ENCODE measurements at regions of chr3 and their contacts with region 1.

Region 1: DNA sequence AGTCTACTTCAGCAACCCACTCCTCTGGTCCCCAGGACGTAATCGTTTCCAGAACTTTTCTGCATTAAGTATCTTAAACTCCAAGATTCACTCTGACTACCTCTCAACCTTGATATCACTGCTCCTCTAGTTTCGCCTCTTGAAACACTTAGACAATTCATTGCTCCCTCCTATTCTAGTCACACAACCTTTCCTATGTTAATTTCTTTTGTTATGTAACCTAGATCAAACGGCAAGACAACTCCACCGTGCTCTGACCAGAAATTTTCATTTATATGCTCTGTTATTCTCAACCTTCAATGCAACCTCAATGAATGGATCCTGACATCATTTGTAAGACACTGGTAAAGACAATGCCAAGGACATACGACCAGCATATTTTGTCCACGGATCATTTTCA is 71.3 kb downstream of the CADM2 start:
- DNase-seq: no peak
- ATAC-seq: no peak
- H3K4me3 ChIP-seq: no peak overlapping the region
- H3K4me3 Mint-ChIP-seq: no peak overlapping the region
- H3K27ac ChIP-seq: no peak overlapping the region
- H3K27ac Mint-ChIP-seq: no peak overlapping the region
- H3K4me1 ChIP-seq: no peaks in the 10 kb centered on the region
- H3K4me1 Mint-ChIP-seq: no peaks in the 10 kb centered on the region
- H3K27me3 ChIP-seq: no peaks in the 10 kb centered on the region
- H3K27me3 Mint-ChIP-seq: no peaks in the 10 kb centered on the region
- CTCF ChIP-seq: no peak

Region 2: GRCh38 chr3:84885199-84885882 is 144.7 kb before region 1 on chr3:
- CTCF ChIA-PET with region 1: no interaction called
- POLR2A ChIA-PET with region 1: no interaction called
- intact Hi-C with region 1: no loop called
- DNase-seq: no peak
- ATAC-seq: no peak
- H3K4me3 ChIP-seq: no peak overlapping the region
- H3K4me3 Mint-ChIP-seq: no peak overlapping the region
- H3K27ac ChIP-seq: no peak overlapping the region
- H3K27ac Mint-ChIP-seq: no peak overlapping the region
- H3K4me1 ChIP-seq: no peaks in the 10 kb centered on the region
- H3K4me1 Mint-ChIP-seq: no peaks in the 10 kb centered on the region
- H3K27me3 ChIP-seq: no peaks in the 10 kb centered on the region
- H3K27me3 Mint-ChIP-seq: no peaks in the 10 kb centered on the region
- CTCF ChIP-seq: no peak

Region 3: DNA sequence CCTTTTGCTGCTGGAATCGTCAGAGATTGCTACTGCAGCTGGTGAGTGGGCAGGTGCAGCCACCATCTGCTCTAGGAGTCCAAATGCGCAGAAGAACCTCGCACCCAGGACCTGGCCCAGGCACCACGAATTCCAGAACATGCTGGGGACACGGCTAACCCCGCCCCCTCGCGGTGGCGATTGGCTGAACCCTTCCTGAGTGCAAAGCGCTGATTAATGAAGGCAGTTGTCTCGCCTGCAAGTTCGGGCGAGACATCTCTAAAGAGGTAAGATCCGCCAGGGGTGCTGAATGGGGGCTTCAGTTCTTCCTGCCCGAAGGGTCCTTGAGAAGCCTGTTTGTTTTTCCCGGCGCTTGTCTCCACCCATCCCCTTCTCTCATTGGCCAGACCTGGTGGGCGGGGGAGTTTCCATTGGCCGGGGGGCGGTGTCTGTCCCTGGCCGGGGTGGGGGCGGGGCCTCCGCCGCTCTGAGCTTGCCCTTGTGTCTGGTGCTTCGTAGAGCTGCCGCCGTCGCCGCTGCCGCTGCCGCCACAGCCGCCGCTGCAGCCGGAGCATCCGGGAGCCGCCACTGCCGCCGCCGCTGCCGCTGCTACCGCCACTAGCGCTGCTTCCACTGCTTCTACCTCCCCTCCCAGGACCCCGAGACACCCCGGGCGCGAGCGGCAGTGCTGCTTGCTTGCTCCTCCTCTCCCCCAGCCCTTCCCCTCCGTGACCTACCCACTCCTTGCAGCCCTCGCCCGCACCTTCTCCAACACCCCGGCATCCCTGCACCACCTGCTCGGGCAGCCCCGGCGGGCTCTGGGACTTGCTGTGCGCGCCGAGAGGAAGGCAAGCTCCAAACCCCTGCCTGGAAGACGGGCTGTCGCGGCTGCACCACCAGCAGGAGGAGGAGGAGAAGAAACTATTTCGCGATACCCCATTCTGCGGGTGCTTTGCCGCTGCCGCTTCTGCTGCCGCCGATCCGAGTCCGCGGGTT is 71.3 kb before region 1 on chr3 and contains the start of gene CADM2:
- CTCF ChIA-PET with region 1: no interaction called
- POLR2A ChIA-PET with region 1: no interaction called
- intact Hi-C with region 1: no loop called
- DNase-seq: peak; percentile 15 to 70 (median 50)
- ATAC-seq: peak; percentile 93
- H3K4me3 ChIP-seq: peak within 1 kb of the TSS; percentile 28 to 44
- H3K4me3 Mint-ChIP-seq: peak within 1 kb of the TSS; percentile 66
- H3K27ac ChIP-seq: no peak within 1 kb of the TSS
- H3K27ac Mint-ChIP-seq: no peak within 1 kb of the TSS
- H3K4me1 ChIP-seq: peaks cover 12% of the 10 kb centered on the region
- H3K4me1 Mint-ChIP-seq: peaks cover 18% of the 10 kb centered on the region
- H3K27me3 ChIP-seq: peaks cover 4 to 6% of the 10 kb centered on the region in 2 experiments
- H3K27me3 Mint-ChIP-seq: peaks cover 41% of the 10 kb centered on the region
- CTCF ChIP-seq: no peak
- total RNA-seq, gene CADM2: 0.33 to 0.36 TPM

Region 4: DNA sequence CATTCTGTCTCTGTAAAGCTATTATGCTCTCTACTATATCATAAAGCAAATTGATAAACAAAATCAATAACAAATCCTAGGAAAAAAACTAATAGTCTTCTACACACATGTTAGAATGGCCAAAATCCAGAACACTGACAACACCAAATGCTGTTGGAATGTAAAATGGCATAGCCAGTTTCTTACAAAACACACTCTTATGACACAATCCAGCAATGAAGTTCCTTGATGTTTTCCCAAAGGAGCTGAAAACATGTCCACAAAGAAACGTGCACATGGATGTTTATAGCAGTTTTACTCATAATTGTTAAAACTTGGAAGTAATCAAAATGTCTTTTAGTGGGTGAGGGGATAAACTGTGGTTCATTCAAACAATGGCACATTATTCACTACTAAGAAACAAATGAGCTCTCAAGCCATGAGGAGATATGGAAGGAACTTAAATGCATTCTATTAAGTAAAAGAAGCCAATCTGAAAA is 38.6 kb before region 1 on chr3:
- CTCF ChIA-PET with region 1: no interaction called
- POLR2A ChIA-PET with region 1: no interaction called
- intact Hi-C with region 1: loop called in 1 of 2 experiments (anchors 1 kb)
- DNase-seq: no peak
- ATAC-seq: no peak
- H3K4me3 ChIP-seq: no peak overlapping the region
- H3K4me3 Mint-ChIP-seq: no peak overlapping the region
- H3K27ac ChIP-seq: no peak overlapping the region
- H3K27ac Mint-ChIP-seq: no peak overlapping the region
- H3K4me1 ChIP-seq: no peaks in the 10 kb centered on the region
- H3K4me1 Mint-ChIP-seq: no peaks in the 10 kb centered on the region
- H3K27me3 ChIP-seq: no peaks in the 10 kb centered on the region
- H3K27me3 Mint-ChIP-seq: no peaks in the 10 kb centered on the region
- CTCF ChIP-seq: no peak

Measured in CD8-positive, alpha-beta T cell (primary cell).